ENCODE measurements at regions of chr2 and their contacts with region 1.

Region 1: DNA sequence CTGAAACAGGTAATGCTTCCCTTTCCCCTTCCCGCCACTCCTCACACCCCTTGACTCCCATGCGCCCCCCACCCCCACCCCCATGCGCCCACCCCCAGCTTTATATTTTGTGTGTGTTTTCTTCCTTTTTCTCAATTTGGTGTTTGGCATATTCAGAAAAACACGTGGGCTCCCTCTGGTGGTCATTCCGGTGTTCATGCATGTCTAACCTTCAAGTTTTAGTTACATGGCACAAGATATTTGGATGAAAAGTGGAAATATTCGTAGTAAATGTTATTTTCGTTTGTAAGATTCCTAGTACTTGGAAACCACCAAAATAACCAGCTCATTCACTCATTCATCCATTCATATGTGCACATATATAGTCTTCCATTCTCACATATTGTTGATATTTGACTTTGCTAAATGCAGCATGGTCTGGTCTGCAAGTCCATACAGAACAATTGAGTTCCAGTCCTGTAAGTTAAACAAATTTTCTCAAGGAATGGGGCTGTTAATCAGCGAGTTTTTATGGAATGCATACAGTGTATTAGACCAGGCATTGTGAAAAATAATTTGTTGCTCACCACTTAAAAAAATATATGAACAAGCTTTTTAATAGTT is 143.6 kb upstream of the MAP3K20 start:
- DNase-seq: peak; percentile 78
- ATAC-seq: peak; percentile 45; the same call in 1 of the 2 replicates
- H3K4me3 ChIP-seq: no peak overlapping the region
- H3K27ac ChIP-seq: no peak overlapping the region
- H3K4me1 ChIP-seq: peaks cover 7% of the 10 kb centered on the region
- H3K27me3 ChIP-seq: no peaks in the 10 kb centered on the region
- CTCF ChIP-seq: peak; percentile 83
- POLR2A ChIP-seq: no peak
- RAD21 ChIP-seq: peak; percentile 77

Region 2: GRCh38 chr2:172596776-172597175 is 335.2 kb before region 1 on chr2:
- CTCF ChIA-PET with region 1: no interaction called
- POLR2A ChIA-PET with region 1: no interaction called
- dilution Hi-C with region 1: no loop called
- in situ Hi-C with region 1: no loop called
- intact Hi-C with region 1: loop called (anchors 10 kb)
- DNase-seq: no peak
- ATAC-seq: no peak
- H3K4me3 ChIP-seq: no peak overlapping the region
- H3K27ac ChIP-seq: no peak overlapping the region
- H3K4me1 ChIP-seq: peaks cover 7% of the 10 kb centered on the region
- H3K27me3 ChIP-seq: no peaks in the 10 kb centered on the region
- CTCF ChIP-seq: no peak
- POLR2A ChIP-seq: no peak
- RAD21 ChIP-seq: no peak

Region 3: GRCh38 chr2:172806493-172806892 is 125.5 kb before region 1 on chr2:
- CTCF ChIA-PET with region 1: interaction called, 19 read pairs
- POLR2A ChIA-PET with region 1: no interaction called
- dilution Hi-C with region 1: no loop called
- in situ Hi-C with region 1: loop called (anchors 5 kb)
- intact Hi-C with region 1: loop called (anchors 1 kb)
- DNase-seq: peak; percentile 68
- ATAC-seq: peak; percentile 85
- H3K4me3 ChIP-seq: no peak overlapping the region
- H3K27ac ChIP-seq: no peak overlapping the region
- H3K4me1 ChIP-seq: no peaks in the 10 kb centered on the region
- H3K27me3 ChIP-seq: no peaks in the 10 kb centered on the region
- CTCF ChIP-seq: peak; percentile 92
- POLR2A ChIP-seq: peak; percentile 53; the same call in 1 of the 2 replicates
- RAD21 ChIP-seq: peak; percentile 96

Region 4: GRCh38 chr2:172813314-172813888 is 118.6 kb before region 1 on chr2:
- CTCF ChIA-PET with region 1: interaction called, 34 read pairs
- POLR2A ChIA-PET with region 1: no interaction called
- dilution Hi-C with region 1: no loop called
- in situ Hi-C with region 1: loop called (anchors 5 kb)
- intact Hi-C with region 1: loop called (anchors 1 kb)
- DNase-seq: peak; percentile 50
- ATAC-seq: peak; percentile 72
- H3K4me3 ChIP-seq: no peak overlapping the region
- H3K27ac ChIP-seq: no peak overlapping the region
- H3K4me1 ChIP-seq: no peaks in the 10 kb centered on the region
- H3K27me3 ChIP-seq: no peaks in the 10 kb centered on the region
- CTCF ChIP-seq: peak; percentile 66
- POLR2A ChIP-seq: no peak
- RAD21 ChIP-seq: peak; percentile 71

Region 5: GRCh38 chr2:172864182-172864581 is 67.8 kb before region 1 on chr2:
- CTCF ChIA-PET with region 1: interaction called, 12 read pairs
- POLR2A ChIA-PET with region 1: no interaction called
- dilution Hi-C with region 1: no loop called
- in situ Hi-C with region 1: no loop called
- intact Hi-C with region 1: loop called (anchors 1 kb)
- DNase-seq: peak; percentile 51
- ATAC-seq: peak; percentile 73; the same call in 1 of the 2 replicates
- H3K4me3 ChIP-seq: no peak overlapping the region
- H3K27ac ChIP-seq: no peak overlapping the region
- H3K4me1 ChIP-seq: peaks cover 4% of the 10 kb centered on the region
- H3K27me3 ChIP-seq: no peaks in the 10 kb centered on the region
- CTCF ChIP-seq: peak; percentile 65
- POLR2A ChIP-seq: no peak
- RAD21 ChIP-seq: peak; percentile 76

Region 6: GRCh38 chr2:172888714-172889669 is 43.0 kb before region 1 on chr2:
- CTCF ChIA-PET with region 1: no interaction called
- POLR2A ChIA-PET with region 1: no interaction called
- dilution Hi-C with region 1: no loop called
- in situ Hi-C with region 1: no loop called
- intact Hi-C with region 1: no loop called
- DNase-seq: no peak
- ATAC-seq: no peak
- H3K4me3 ChIP-seq: no peak overlapping the region
- H3K27ac ChIP-seq: no peak overlapping the region
- H3K4me1 ChIP-seq: no peaks in the 10 kb centered on the region
- H3K27me3 ChIP-seq: peaks cover 3% of the 10 kb centered on the region; the same call in 1 of the 2 replicates
- CTCF ChIP-seq: no peak
- POLR2A ChIP-seq: no peak
- RAD21 ChIP-seq: no peak

Region 7: GRCh38 chr2:173326806-173327205 is 394.8 kb after region 1 on chr2:
- CTCF ChIA-PET with region 1: no interaction called
- POLR2A ChIA-PET with region 1: no interaction called
- dilution Hi-C with region 1: no loop called
- in situ Hi-C with region 1: no loop called
- intact Hi-C with region 1: no loop called
- DNase-seq: peak; percentile 24
- ATAC-seq: no peak
- H3K4me3 ChIP-seq: no peak overlapping the region
- H3K27ac ChIP-seq: no peak overlapping the region
- H3K4me1 ChIP-seq: no peaks in the 10 kb centered on the region
- H3K27me3 ChIP-seq: no peaks in the 10 kb centered on the region
- CTCF ChIP-seq: no peak
- POLR2A ChIP-seq: no peak
- RAD21 ChIP-seq: no peak

Measured in IMR-90 (cell line).